ENCODE measurements at regions of chr6 and their contacts with region 1.

Region 1: DNA sequence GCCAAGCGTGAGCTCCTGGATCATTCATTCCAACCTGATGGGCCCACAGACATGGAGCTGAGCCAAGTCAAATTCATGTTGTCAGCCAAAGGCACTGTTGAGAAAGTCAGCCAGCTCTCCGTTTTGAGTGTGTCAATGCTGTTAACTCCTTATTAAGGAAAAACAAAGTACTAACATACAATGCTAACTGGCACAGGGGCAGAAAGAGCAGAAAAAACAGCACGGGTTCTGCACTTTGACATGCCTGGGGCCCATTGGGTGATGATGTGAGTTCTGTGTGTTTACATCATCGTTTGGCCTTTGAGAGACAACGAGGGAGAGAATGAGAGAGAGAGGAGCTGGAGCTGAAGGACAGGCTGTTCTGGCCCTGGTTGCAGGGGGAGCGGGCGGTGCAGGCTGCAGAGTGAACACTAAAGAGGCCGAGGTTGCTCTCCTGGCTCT is 85.9 kb downstream of the SMOC2 start:
- DNase-seq: peak; percentile 61 to 78
- ATAC-seq: peak; percentile 83
- H3K4me3 ChIP-seq: no peak overlapping the region
- H3K27ac ChIP-seq: peak overlapping the region; percentile 57 to 63
- H3K4me1 ChIP-seq: peaks cover 2 to 3% of the 10 kb centered on the region in 2 donors
- H3K27me3 ChIP-seq: no peaks in the 10 kb centered on the region

Region 2: DNA sequence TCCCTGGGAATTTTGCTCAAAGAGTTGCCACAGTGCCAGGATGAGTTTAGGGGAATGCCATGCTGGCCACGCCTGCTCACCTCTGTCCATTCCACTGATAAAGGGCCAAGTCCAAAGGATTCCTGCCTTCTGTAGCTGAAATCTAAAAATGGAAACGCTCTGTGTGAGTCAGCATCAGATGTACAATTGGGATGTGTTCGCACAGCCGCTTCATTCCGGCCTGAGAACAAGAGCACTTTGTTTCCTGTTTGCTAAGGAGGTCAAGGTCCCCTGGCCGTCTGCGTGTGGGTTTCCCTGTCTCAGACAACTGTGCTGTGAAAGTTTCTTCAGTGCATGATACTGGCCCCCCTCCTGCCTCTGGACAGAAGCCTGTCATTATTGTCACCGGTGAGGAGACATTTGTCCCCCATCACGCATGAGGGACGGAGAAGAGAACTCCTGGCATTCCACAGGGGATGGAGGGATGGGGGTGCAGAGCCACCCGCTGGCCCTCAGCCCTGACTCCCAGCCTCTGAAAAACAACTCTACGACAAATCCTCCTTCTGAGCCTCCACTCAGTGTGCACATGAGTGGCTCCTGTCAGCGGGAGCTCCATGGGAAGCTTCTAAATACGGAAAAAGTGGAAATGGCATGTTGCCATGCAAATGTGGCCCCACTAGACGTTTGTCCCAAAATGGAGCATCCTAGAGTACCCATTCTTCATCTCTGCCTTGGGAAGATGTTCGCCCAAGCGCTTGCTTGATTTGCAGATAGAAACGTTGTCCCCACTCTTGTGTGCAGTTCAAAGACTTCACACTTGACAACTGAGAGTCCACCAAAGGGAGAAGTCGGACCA is 843.6 kb before region 1 on chr6:
- intact Hi-C with region 1: no loop called
- DNase-seq: peak in 1 of 2 donors; percentile 41
- ATAC-seq: peak; percentile 39
- H3K4me3 ChIP-seq: no peak overlapping the region
- H3K27ac ChIP-seq: no peak overlapping the region
- H3K4me1 ChIP-seq: no peaks in the 10 kb centered on the region
- H3K27me3 ChIP-seq: no peaks in the 10 kb centered on the region

Region 3: GRCh38 chr6:168440520-168441433 is 86.1 kb before region 1 on chr6 and contains the start of gene SMOC2:
- intact Hi-C with region 1: loop called in 1 of 2 experiments (anchors 5 kb)
- DNase-seq: peak; percentile 76 to 86
- ATAC-seq: peak; percentile 74
- H3K4me3 ChIP-seq: peak within 1 kb of the TSS; percentile 58 to 88
- H3K27ac ChIP-seq: peak within 1 kb of the TSS; percentile 30 to 36
- H3K4me1 ChIP-seq: peaks cover 2% of the 10 kb centered on the region in 2 donors
- H3K27me3 ChIP-seq: no peaks in the 10 kb centered on the region
- total RNA-seq, gene SMOC2: 203 to 369 TPM

Region 4: GRCh38 chr6:168583821-168584220 is 57.0 kb after region 1 on chr6:
- intact Hi-C with region 1: loop called in 1 of 2 experiments (anchors 5 kb)
- DNase-seq: peak in 1 of 2 donors; percentile 54
- ATAC-seq: peak; percentile 53
- H3K4me3 ChIP-seq: no peak overlapping the region
- H3K27ac ChIP-seq: peak overlapping the region; percentile 52 to 90
- H3K4me1 ChIP-seq: peaks cover 0 to under 1% of the 10 kb centered on the region in 2 donors
- H3K27me3 ChIP-seq: no peaks in the 10 kb centered on the region

Measured in aorta (tissue), 5 donors.